Caco-2 (cell line): ENCODE measurements at regions of chr6 and their contacts with region 1.

Region 1: DNA sequence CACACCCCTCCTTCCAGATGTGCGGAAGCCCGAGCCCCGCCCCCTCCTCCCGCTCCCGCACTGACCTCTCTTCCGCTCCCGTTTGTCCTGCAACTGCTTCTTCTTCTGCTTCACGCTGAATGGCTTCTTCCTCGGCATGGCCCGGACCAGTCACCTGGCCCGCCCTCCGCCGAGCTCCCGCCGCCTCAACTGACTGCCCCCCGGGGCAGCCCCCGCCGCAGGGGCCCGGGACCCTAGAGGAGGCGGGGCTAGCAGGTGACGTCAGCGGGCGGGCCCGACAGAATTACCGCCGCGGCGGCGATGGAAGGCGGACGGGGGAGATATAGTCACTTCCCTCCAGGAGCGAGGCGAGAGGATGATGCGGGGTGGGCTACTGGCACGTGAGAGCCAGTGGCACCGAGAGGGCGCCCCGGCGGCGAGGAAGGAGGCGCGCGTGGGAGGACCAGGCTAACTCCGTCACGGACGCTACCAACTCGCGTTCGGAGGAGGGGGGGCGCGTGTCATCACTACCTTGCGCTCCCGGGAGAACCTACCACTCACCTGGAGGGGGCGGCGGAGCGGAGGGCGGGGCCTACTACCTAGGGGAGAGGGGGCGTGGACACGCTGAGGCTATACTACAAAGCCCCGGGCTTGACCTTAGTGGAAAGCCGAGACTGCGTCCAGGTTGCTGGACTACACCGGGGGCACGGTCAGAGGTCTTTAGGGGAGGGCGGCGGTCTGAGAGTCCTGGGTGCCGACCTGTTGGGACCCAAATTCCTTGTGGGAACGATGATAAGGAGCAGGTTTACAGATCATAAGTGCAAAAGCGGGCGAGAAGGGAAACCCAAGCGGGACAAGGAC is at the start of gene GNL1:
- DNase-seq: peak; percentile 98 to 99
- H3K4me3 ChIP-seq: peak within 1 kb of the TSS; percentile 88
- H3K4me3 Mint-ChIP-seq: peak within 1 kb of the TSS; percentile 95
- H3K27ac Mint-ChIP-seq: peak within 1 kb of the TSS; percentile 100
- H3K4me1 ChIP-seq: peaks cover 5% of the 10 kb centered on the region; the same call in 1 of the 2 replicates
- H3K4me1 Mint-ChIP-seq: peaks cover 14% of the 10 kb centered on the region
- H3K27me3 ChIP-seq: no peaks in the 10 kb centered on the region
- H3K27me3 Mint-ChIP-seq: no peaks in the 10 kb centered on the region
- CTCF ChIP-seq: no peak
- total RNA-seq, gene GNL1: 84.1 and 94.1 TPM in 2 replicates

Region 2: GRCh38 chr6:30520522-30520921 is 35.8 kb before region 1 on chr6:
- CTCF ChIA-PET with region 1: no interaction called
- POLR2A ChIA-PET with region 1: no interaction called
- intact Hi-C with region 1: no loop called
- DNase-seq: no peak
- H3K4me3 ChIP-seq: no peak overlapping the region
- H3K4me3 Mint-ChIP-seq: no peak overlapping the region
- H3K27ac Mint-ChIP-seq: no peak overlapping the region
- H3K4me1 ChIP-seq: no peaks in the 10 kb centered on the region
- H3K4me1 Mint-ChIP-seq: no peaks in the 10 kb centered on the region
- H3K27me3 ChIP-seq: no peaks in the 10 kb centered on the region
- H3K27me3 Mint-ChIP-seq: no peaks in the 10 kb centered on the region
- CTCF ChIP-seq: no peak

Region 3: DNA sequence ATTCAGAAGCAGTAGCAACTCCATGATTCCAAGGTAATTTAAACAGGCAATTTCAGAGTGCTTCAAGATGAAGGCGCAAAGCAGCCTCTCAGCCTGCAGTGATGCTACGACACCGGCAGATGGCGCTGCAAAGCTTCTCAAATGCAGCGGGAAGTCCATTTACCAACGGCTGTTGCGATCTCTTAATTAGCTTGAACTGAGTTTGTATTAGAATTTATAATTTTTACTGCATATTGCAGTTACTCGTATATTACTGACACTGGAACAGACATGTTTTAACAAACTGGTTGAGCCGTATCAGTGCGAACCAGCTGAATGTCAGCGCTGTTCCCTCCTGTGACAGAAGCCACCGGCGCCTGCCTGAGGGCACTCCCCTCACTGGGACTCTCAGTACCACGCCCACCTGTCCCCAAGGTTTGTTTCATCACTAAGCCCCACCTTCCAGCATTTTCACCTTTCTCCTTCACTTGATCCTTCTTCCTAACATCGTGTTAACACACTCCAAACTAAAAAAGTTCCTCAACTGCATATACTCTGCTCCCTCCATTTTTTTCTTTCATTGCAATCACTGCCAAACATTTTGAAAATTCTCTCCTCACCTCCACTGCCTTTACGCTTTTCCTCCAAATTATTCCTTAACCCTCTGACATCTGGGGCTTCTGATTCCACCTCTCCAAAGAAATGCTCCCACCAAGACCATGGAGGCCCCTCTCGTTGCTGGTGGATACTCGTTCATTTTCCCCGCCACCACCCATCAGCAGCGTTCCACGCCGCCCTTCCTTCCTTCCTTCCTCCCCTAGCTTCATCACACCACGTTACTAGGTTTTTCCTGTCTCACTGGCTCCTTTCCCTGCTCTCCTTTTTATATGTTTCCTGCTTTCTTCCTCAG is 14.5 kb before region 1 on chr6:
- CTCF ChIA-PET with region 1: interaction called, 20 read pairs
- POLR2A ChIA-PET with region 1: no interaction called
- intact Hi-C with region 1: no loop called
- DNase-seq: peak; percentile 75
- H3K4me3 ChIP-seq: peak overlapping the region; percentile 32
- H3K4me3 Mint-ChIP-seq: peak overlapping the region; percentile 69
- H3K27ac Mint-ChIP-seq: peak overlapping the region; percentile 4
- H3K4me1 ChIP-seq: no peaks in the 10 kb centered on the region
- H3K4me1 Mint-ChIP-seq: peaks cover 16% of the 10 kb centered on the region
- H3K27me3 ChIP-seq: no peaks in the 10 kb centered on the region
- H3K27me3 Mint-ChIP-seq: no peaks in the 10 kb centered on the region
- CTCF ChIP-seq: peak; percentile 90 to 97

Region 4: GRCh38 chr6:30571075-30571768 is 14.9 kb after region 1 on chr6 and contains the start of gene ABCF1:
- CTCF ChIA-PET with region 1: no interaction called
- POLR2A ChIA-PET with region 1: interaction called, 25 read pairs
- intact Hi-C with region 1: loop called (anchors 1 kb)
- DNase-seq: peak; percentile 96 to 99
- H3K4me3 ChIP-seq: peak within 1 kb of the TSS; percentile 83
- H3K4me3 Mint-ChIP-seq: peak within 1 kb of the TSS; percentile 86
- H3K27ac Mint-ChIP-seq: peak within 1 kb of the TSS; percentile 93
- H3K4me1 ChIP-seq: peaks cover 15% of the 10 kb centered on the region; the same call in 1 of the 2 replicates
- H3K4me1 Mint-ChIP-seq: peaks cover 30% of the 10 kb centered on the region
- H3K27me3 ChIP-seq: no peaks in the 10 kb centered on the region
- H3K27me3 Mint-ChIP-seq: no peaks in the 10 kb centered on the region
- CTCF ChIP-seq: no peak
- total RNA-seq, gene ABCF1: 93.7 and 95.6 TPM in 2 replicates

Region 5: GRCh38 chr6:30600451-30600961 is 44.2 kb after region 1 on chr6:
- CTCF ChIA-PET with region 1: no interaction called
- POLR2A ChIA-PET with region 1: no interaction called
- intact Hi-C with region 1: loop called (anchors 5 kb)
- DNase-seq: no peak
- H3K4me3 ChIP-seq: no peak overlapping the region
- H3K4me3 Mint-ChIP-seq: no peak overlapping the region
- H3K27ac Mint-ChIP-seq: peak overlapping the region; percentile 53
- H3K4me1 ChIP-seq: no peaks in the 10 kb centered on the region
- H3K4me1 Mint-ChIP-seq: no peaks in the 10 kb centered on the region
- H3K27me3 ChIP-seq: no peaks in the 10 kb centered on the region
- H3K27me3 Mint-ChIP-seq: no peaks in the 10 kb centered on the region
- CTCF ChIP-seq: no peak